OCI-LY7 (cell line): ENCODE measurements at regions of chr7 and their contacts with region 1.

Region 1: DNA sequence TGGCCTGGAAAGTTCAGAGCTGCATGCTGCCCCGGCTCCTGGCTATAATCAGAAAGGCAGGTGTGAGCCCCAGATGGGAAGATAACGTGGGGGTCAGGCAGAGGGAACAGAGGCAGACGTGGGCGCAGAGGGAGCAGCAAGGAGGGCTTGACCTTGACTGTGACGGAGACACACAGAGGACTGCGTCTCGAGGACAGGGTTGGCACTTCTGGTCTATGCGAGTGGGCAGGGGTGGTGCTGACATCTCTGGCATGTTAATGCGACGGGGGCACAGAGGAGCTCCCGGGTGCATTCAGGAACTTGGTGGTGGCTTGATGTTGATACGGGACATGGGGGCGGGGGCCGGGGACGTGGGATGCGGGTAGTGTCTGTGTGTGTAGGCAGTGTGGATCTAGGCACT is 232.1 kb upstream of the GRB10 start:
- DNase-seq: no peak
- H3K4me3 ChIP-seq: no peak overlapping the region
- H3K27ac ChIP-seq: no peak overlapping the region
- H3K4me1 ChIP-seq: no peaks in the 10 kb centered on the region
- CTCF ChIP-seq: no peak

Region 2: DNA sequence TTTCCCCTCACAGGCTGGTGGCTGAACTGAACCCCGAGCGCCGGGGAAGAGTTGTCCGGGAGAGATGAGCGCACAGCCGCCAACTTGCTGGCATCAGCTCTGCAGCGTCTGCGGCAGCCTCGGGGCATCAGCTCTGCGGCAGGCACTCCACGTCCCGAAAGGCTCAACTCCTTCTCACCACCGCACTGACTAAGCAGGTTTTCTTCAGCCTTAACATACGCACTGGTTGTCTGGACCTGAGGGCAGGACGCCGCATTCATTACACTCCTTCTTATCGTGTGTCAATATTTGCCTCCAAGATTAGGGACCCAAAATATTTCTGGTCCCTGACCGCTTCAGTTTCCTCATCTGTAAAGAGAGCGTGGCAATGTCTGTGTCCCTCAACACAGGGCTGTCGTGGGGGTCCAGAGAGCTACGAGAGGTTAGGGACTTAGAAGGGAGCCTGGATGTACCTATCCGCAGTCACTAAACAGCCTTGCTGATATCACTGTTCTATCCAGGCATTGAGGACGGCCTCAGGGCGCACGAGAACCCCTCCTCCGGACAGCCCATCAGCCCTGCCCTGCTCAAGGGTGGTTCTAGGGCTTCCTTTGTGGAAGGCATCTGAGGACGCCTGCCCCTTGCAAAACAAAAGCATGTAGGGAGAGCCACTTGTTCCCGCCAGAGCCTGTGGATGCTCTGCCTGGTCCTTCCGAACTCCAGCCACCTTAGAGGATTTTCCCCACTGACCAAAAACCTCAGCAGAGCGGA is 521.9 kb before region 1 on chr7:
- CTCF ChIA-PET with region 1: no interaction called
- POLR2A ChIA-PET with region 1: no interaction called
- intact Hi-C with region 1: no loop called
- DNase-seq: no peak
- H3K4me3 ChIP-seq: no peak overlapping the region
- H3K27ac ChIP-seq: no peak overlapping the region
- H3K4me1 ChIP-seq: no peaks in the 10 kb centered on the region
- CTCF ChIP-seq: no peak

Region 3: DNA sequence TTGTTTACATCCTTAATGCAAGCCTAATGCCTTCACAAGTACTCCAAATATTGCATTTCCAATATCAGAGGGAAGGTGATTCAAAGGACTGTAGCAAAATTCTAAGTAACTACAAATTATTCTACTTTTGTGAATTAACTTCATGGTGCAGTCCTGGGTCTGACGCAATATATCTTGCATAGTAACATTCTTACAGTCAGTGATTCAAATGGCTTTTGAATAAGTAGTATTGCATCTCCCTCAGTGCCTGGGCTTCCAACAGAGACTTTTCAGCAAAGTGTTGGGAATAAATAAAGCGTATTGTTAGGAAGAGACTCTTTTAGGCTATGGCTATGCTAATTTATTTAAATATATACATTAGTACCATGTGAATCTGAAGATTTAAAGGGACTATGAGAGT is 866.5 kb after region 1 on chr7:
- CTCF ChIA-PET with region 1: interaction called, 13 read pairs
- POLR2A ChIA-PET with region 1: no interaction called
- intact Hi-C with region 1: no loop called
- DNase-seq: no peak
- H3K4me3 ChIP-seq: no peak overlapping the region
- H3K27ac ChIP-seq: no peak overlapping the region
- H3K4me1 ChIP-seq: no peaks in the 10 kb centered on the region
- CTCF ChIP-seq: no peak